A673 (cell line): ENCODE measurements at regions of chr5 and their contacts with region 1.

Region 1: GRCh38 chr5:170235876-170236864 is 3.4 kb downstream of the C5orf58 start:
- DNase-seq: no peak
- H3K4me3 ChIP-seq: no peak overlapping the region
- H3K27ac ChIP-seq: no peak overlapping the region
- H3K4me1 ChIP-seq: no peaks in the 10 kb centered on the region
- H3K27me3 ChIP-seq: peaks cover 12% of the 10 kb centered on the region
- CTCF ChIP-seq: no peak

Region 2: DNA sequence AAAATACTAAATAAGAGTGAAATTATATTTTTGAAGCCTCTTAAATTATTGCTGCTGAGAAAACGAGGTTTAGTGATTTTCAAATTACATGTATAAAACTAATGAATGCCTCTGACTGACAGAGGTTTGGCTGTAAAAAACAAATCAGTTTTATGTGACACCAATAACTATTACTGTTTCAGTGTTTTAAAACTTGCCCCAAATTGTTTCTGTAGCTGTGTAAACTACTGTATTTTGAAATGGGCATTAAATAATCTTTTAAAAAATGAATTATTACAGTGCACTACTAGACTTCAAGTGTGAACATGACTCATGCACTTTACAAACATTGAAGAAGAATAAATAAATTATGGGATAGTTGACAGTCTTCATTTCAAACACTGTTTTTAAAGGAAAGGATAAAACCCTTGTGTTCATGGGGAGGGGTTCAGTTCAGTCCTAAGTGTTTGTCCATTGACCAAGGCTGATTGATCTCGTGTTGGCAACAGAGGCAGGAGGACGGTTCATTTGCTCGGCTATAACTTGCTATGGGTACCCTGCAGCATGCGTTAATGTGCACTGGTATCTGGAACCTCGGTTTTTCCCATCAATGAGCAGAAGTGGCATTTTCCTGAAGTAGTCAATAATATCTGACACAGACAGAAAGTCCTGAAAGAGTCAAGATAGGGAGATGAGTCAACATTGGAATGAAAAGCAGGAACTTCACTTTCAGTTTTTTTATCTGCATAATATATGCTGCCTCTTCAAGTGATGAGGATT is 12.2 kb after region 1 on chr5:
- CTCF ChIA-PET with region 1: no interaction called
- POLR2A ChIA-PET with region 1: no interaction called
- intact Hi-C with region 1: loop called (anchors 1 kb)
- DNase-seq: no peak
- H3K4me3 ChIP-seq: no peak overlapping the region
- H3K27ac ChIP-seq: no peak overlapping the region
- H3K4me1 ChIP-seq: peaks cover 22% of the 10 kb centered on the region
- H3K27me3 ChIP-seq: no peaks in the 10 kb centered on the region
- CTCF ChIP-seq: no peak